B cell (primary cell): ENCODE measurements at regions of chr14 and their contacts with region 1.

Region 1: DNA sequence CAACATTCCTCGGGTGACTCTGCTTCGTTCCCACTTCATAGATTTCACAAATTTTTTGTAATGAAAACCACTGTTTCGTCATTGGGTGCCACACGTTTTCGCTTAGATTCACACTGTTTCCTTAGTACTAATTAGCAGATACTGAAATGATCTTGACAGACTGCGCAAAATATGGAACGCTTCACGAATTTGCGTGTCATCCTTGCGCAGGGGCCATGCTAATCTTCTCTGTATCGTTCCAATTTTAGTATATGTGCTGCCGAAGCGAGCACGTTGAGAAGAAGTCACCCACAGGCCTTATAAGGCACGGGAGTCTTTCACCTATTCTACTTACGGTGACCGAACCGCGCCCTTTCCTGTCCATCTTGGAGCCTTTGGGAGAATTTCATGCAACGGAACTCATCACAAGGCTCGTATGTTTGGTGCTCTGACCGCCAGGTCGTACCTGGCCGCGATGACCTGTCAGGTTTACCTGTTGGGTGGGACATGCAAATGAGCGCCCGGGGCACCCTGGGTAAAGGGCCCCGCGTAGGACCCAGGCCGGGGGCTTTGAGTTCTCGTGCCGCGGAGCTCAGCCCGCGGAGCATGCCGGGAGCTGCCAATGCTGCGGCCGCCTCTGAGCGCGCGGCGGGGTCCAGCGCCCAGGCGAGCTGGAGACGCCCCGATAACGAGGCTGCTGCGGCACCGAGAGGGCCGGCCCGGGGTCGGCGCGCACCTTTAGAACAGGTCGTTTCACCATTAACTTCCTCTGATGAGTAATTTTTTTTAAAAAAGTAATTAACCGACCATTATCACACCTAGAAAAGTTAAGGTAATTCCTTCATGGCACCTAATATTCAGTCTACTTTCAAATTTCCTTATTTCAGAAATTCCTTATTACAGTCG is at the start of gene RNU6-8:
- DNase-seq: peak; percentile 94
- ATAC-seq: peak; percentile 77
- H3K4me3 ChIP-seq: peak within 1 kb of the TSS; percentile 67 to 88 (median 87)
- H3K4me3 Mint-ChIP-seq: peak within 1 kb of the TSS; percentile 92
- H3K27ac ChIP-seq: peak within 1 kb of the TSS; percentile 99
- H3K27ac Mint-ChIP-seq: peak within 1 kb of the TSS; percentile 99
- H3K4me1 ChIP-seq: peaks cover 13 to 27% of the 10 kb centered on the region in 2 donors
- H3K4me1 Mint-ChIP-seq: peaks cover 48% of the 10 kb centered on the region
- H3K27me3 ChIP-seq: no peaks in the 10 kb centered on the region
- H3K27me3 Mint-ChIP-seq: no peaks in the 10 kb centered on the region
- CTCF ChIP-seq: no peak
- total RNA-seq, gene RNU6-8: not detected in 2 replicates

Region 2: DNA sequence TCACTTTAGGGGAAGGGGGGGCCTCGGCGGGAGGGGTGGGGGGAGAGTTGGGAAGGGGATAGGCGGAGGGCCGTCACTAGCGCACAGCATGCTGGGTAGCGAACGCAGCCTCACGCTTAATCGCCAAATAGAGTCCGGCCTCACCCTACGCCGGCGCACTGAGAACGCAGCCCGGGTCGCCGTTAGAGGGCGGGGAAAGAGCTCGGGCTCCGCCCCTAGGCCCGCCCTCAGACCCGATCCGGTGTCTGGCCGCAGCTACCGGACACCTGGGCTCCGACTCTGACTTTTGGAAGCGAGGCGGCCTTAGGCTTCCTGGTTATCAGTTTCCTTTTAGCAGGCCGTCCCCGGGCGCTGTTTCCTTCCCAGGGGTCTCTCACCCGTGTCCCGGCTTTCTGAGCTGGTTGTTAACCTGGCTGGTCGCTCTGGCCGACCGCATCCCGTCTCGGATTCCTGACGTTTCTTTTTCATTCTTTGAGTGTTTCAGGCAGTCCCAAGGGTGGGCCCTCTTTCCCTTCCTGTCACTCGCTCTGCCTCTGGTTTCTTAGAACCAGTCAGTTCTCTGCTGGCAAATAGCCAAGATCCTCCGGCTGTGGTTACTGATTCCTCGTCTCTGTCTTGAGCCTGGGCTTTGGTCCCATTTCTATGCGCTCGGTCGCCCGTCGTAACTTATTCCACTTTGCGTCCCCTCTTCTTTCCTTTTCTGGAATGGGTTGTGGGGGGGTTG is 1176.7 kb before region 1 on chr14:
- CTCF ChIA-PET with region 1: no interaction called
- POLR2A ChIA-PET with region 1: no interaction called
- intact Hi-C with region 1: loop called (anchors 5 kb)
- DNase-seq: peak; percentile 95
- ATAC-seq: peak; percentile 94
- H3K4me3 ChIP-seq: peak overlapping the region; percentile 85 to 98 (median 93)
- H3K4me3 Mint-ChIP-seq: peak overlapping the region; percentile 97
- H3K27ac ChIP-seq: peak overlapping the region; percentile 71 to 93
- H3K27ac Mint-ChIP-seq: peak overlapping the region; percentile 93
- H3K4me1 ChIP-seq: peaks cover 15 to 17% of the 10 kb centered on the region in 2 donors
- H3K4me1 Mint-ChIP-seq: peaks cover 40% of the 10 kb centered on the region
- H3K27me3 ChIP-seq: no peaks in the 10 kb centered on the region
- H3K27me3 Mint-ChIP-seq: no peaks in the 10 kb centered on the region
- CTCF ChIP-seq: no peak

Region 3: GRCh38 chr14:31420319-31421111 is 782.7 kb before region 1 on chr14 and contains the start of gene HEATR5A:
- CTCF ChIA-PET with region 1: no interaction called
- POLR2A ChIA-PET with region 1: interaction called, 3 read pairs
- intact Hi-C with region 1: loop called (anchors 1 kb)
- DNase-seq: peak; percentile 95
- ATAC-seq: peak; percentile 97
- H3K4me3 ChIP-seq: peak within 1 kb of the TSS; percentile 62 to 100 (median 95)
- H3K4me3 Mint-ChIP-seq: peak within 1 kb of the TSS; percentile 96
- H3K27ac ChIP-seq: peak within 1 kb of the TSS; percentile 30 to 75
- H3K27ac Mint-ChIP-seq: peak within 1 kb of the TSS; percentile 93
- H3K4me1 ChIP-seq: peaks cover 10 to 12% of the 10 kb centered on the region in 2 donors
- H3K4me1 Mint-ChIP-seq: peaks cover 26% of the 10 kb centered on the region
- H3K27me3 ChIP-seq: no peaks in the 10 kb centered on the region
- H3K27me3 Mint-ChIP-seq: no peaks in the 10 kb centered on the region
- CTCF ChIP-seq: peak; percentile 31
- total RNA-seq, gene HEATR5A: 19.1 and 22.1 TPM in 2 replicates

Region 4: DNA sequence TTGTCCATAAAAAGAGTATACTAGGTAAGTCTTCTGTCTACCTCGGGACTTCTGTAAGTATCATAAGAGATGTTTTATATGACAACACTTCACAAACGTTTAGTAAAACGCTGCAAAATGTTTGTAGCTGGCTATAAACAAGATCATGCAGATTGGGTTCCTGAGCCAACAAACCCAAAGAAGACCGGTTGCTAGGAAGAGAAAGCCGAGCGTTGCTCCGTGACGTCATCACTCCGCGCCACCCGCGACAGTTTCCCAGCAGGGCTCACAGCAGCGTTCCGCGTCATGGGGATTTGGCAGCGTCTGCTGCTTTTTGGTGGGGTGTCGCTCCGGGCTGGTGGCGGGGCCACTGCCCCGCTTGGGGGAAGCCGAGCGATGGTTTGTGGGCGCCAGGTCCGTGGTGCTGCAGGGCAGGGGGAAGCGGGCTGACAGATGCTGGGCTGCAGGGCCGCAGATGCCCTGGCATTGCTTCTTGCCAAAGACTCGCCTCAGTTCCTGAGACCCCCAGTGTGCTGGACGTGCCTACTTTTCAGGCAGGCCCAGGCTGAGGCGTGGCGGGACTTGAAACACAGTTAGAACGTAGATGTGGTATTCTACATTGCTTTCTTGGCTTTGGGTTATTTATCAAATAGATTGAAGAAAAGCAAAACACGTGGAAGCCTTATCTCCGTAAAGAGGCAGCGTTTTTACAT is 641.9 kb before region 1 on chr14 and contains the start of gene NUBPL:
- CTCF ChIA-PET with region 1: no interaction called
- POLR2A ChIA-PET with region 1: no interaction called
- intact Hi-C with region 1: loop called (anchors 1 kb)
- DNase-seq: peak; percentile 98
- ATAC-seq: peak; percentile 96
- H3K4me3 ChIP-seq: peak within 1 kb of the TSS; percentile 67 to 92 (median 84)
- H3K4me3 Mint-ChIP-seq: peak within 1 kb of the TSS; percentile 93
- H3K27ac ChIP-seq: peak within 1 kb of the TSS; percentile 62 to 94
- H3K27ac Mint-ChIP-seq: peak within 1 kb of the TSS; percentile 97
- H3K4me1 ChIP-seq: peaks cover 16 to 17% of the 10 kb centered on the region in 2 donors
- H3K4me1 Mint-ChIP-seq: peaks cover 25% of the 10 kb centered on the region
- H3K27me3 ChIP-seq: peaks cover 0 to 8% (median 3%) of the 10 kb centered on the region in 4 experiments
- H3K27me3 Mint-ChIP-seq: peaks cover 7% of the 10 kb centered on the region
- CTCF ChIP-seq: no peak
- total RNA-seq, gene NUBPL: 14.2 and 15.5 TPM in 2 replicates

Region 5: DNA sequence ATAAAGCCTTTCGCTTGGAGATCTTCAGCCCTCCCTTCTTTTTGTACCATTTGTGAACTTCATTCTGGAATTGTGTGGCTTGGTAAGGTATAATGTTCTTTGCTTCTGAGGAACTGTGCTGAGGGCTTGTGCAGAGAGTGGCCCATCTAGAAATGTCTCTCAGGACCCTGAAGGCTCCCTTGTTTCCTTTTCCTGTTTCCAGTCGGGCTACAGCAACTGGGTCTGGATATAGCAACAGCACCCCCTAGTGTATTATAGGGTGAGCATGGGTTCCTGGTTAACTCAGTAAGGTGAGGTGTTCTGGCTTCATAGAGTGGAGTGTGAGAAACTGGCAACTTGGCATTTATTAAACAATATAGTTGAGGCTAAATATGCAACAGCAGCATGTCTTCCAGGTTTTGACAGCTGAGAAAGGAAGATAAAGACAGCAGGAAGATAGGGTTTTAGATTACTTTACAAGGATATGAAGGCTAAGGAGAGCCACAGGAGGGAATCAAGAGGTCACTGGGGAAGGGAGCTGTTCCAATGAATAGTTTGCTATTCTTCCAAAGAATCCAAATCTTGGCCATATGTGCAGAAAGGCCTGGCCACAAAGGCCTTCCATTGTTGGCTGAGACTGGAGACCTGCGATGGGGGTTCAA is 48.9 kb after region 1 on chr14:
- CTCF ChIA-PET with region 1: interaction called, 7 read pairs
- POLR2A ChIA-PET with region 1: no interaction called
- intact Hi-C with region 1: loop called (anchors 1 kb)
- DNase-seq: peak; percentile 77
- ATAC-seq: peak; percentile 90
- H3K4me3 ChIP-seq: no peak overlapping the region
- H3K4me3 Mint-ChIP-seq: no peak overlapping the region
- H3K27ac ChIP-seq: no peak overlapping the region
- H3K27ac Mint-ChIP-seq: no peak overlapping the region
- H3K4me1 ChIP-seq: peaks cover 0 to 5% of the 10 kb centered on the region in 2 donors
- H3K4me1 Mint-ChIP-seq: no peaks in the 10 kb centered on the region
- H3K27me3 ChIP-seq: no peaks in the 10 kb centered on the region
- H3K27me3 Mint-ChIP-seq: no peaks in the 10 kb centered on the region
- CTCF ChIP-seq: peak; percentile 87

Region 6: DNA sequence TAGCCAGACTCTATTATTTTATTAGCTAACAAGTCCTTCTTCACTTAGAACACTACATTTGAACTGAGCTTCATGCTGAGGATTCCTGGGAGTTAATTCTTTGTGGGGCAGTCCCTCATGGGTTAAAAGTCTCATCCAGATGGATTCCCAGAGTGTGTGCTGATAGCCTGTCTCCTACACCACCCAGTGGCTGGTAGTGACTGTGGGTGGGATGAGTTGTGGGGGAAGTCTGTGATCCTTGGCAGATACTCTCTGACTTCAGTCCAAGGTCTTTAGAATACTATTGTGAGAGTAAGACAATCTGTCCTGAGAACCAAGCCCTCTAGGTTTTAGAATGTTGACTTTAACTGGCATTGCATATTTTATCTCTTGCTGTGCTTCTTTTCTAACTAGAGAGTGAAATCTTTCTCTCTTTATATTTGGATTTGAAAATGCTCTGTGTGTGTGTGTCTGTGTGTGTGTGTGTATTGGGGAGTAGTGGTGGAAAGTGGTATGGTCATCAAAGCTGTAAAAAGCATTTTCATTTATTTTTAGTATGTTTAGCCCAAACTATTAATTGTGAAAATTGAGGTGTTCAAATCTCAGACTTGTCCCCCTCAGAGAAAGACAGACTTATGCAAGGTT is 163.1 kb after region 1 on chr14:
- CTCF ChIA-PET with region 1: no interaction called
- POLR2A ChIA-PET with region 1: no interaction called
- intact Hi-C with region 1: no loop called
- DNase-seq: no peak
- ATAC-seq: no peak
- H3K4me3 ChIP-seq: no peak overlapping the region
- H3K4me3 Mint-ChIP-seq: no peak overlapping the region
- H3K27ac ChIP-seq: no peak overlapping the region
- H3K27ac Mint-ChIP-seq: no peak overlapping the region
- H3K4me1 ChIP-seq: no peaks in the 10 kb centered on the region
- H3K4me1 Mint-ChIP-seq: no peaks in the 10 kb centered on the region
- H3K27me3 ChIP-seq: no peaks in the 10 kb centered on the region
- H3K27me3 Mint-ChIP-seq: peaks cover 8% of the 10 kb centered on the region
- CTCF ChIP-seq: no peak